Heart left ventricle (tissue), 16 donors: ENCODE measurements at regions of chr12 and their contacts with region 1.

Region 1: DNA sequence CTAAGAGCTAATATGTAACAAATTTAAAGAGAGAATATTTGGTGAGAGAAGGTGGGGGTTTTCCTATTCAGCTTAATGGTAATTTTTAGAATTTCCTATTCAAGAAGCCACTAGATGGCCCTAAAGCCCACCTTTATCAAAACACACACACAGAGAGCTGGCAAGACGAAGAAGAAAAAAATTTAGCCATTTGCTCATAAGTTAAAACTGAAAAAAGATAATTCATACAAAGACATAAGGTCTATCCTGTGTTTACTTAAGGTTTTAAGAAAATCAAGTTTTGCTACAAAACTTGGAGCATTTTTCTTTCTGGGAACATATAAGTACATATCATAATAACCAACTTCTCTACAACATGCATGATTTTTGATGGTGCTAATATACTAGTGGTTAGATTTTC is 46.8 kb upstream of the PCED1B start:
- DNase-seq: no peak
- ATAC-seq: peak in 3 of 4 donors; percentile 45 to 80 (median 77)
- H3K4me3 ChIP-seq: no peak overlapping the region
- H3K27ac ChIP-seq: no peak overlapping the region
- H3K4me1 ChIP-seq: peaks cover 0 to 4% (median 0%) of the 10 kb centered on the region in 12 donors
- H3K27me3 ChIP-seq: no peaks in the 10 kb centered on the region
- CTCF ChIP-seq: peak; percentile 29 to 72 (median 60)
- POLR2A ChIP-seq: no peak

Region 2: GRCh38 chr12:46983393-46984266 is 49.0 kb before region 1 on chr12:
- intact Hi-C with region 1: no loop called
- DNase-seq: no peak
- ATAC-seq: peak in 3 of 4 donors; percentile 68 to 75 (median 70)
- H3K4me3 ChIP-seq: no peak overlapping the region
- H3K27ac ChIP-seq: no peak overlapping the region
- H3K4me1 ChIP-seq: peaks cover 0 to 3% (median 0%) of the 10 kb centered on the region in 12 donors
- H3K27me3 ChIP-seq: no peaks in the 10 kb centered on the region
- CTCF ChIP-seq: peak; percentile 49 to 78 (median 66)
- POLR2A ChIP-seq: no peak

Region 3: GRCh38 chr12:47004634-47005033 is 28.0 kb before region 1 on chr12:
- intact Hi-C with region 1: no loop called
- DNase-seq: no peak
- ATAC-seq: no peak
- H3K4me3 ChIP-seq: no peak overlapping the region
- H3K27ac ChIP-seq: no peak overlapping the region
- H3K4me1 ChIP-seq: no peaks in the 10 kb centered on the region
- H3K27me3 ChIP-seq: peaks cover 0 to 4% (median 0%) of the 10 kb centered on the region in 9 donors
- CTCF ChIP-seq: no peak
- POLR2A ChIP-seq: no peak

Region 4: GRCh38 chr12:47088021-47088944 is 55.6 kb after region 1 on chr12:
- intact Hi-C with region 1: no loop called
- DNase-seq: no peak
- ATAC-seq: no peak
- H3K4me3 ChIP-seq: no peak overlapping the region
- H3K27ac ChIP-seq: peak overlapping the region in 2 of 12 donors; percentile 21 to 95
- H3K4me1 ChIP-seq: peaks cover 0 to 51% (median 14%) of the 10 kb centered on the region in 12 donors
- H3K27me3 ChIP-seq: no peaks in the 10 kb centered on the region
- CTCF ChIP-seq: no peak
- POLR2A ChIP-seq: no peak

Region 5: DNA sequence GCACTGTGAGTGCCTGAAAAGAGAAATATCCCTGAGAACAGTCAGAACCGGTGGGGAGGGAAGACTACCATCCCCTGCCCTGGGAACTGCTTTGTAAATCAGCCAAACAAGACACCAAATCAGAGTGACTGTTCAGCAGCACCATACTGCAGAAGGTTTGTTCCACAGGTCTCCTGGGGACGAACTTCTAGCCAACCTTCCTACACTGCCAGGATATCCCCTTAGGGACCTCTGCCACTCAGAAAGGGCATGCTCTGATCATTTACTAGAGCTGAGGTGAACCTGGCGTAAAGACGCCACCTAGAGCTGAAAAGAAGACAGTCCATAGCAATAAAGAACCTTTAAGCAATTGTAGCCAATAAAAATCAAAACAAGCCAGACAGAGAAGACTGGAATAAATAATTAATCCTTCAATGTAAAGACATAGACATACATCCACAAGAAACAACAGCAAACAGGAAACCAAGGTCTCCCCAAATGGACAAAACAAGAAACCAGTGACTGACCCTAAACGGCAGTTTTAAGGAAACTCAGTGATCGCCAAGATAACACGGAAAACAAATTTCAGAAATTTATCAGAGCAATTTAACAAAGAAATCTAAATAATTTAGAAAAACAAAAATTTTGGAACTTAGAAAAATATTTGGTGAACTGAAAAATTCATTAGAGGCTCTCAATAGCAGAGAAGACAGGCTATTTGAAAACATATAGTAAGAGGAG is 275.2 kb after region 1 on chr12:
- intact Hi-C with region 1: loop called in 9 of 10 experiments (anchors 2 to 5 kb)
- DNase-seq: peak in 1 of 5 donors; percentile 23
- ATAC-seq: peak in 3 of 4 donors; percentile 82 to 86 (median 82)
- H3K4me3 ChIP-seq: peak overlapping the region in 2 of 12 donors; percentile 17 to 35
- H3K27ac ChIP-seq: no peak overlapping the region
- H3K4me1 ChIP-seq: no peaks in the 10 kb centered on the region
- H3K27me3 ChIP-seq: no peaks in the 10 kb centered on the region
- CTCF ChIP-seq: peak; percentile 30 to 58 (median 49)
- POLR2A ChIP-seq: no peak

Region 6: DNA sequence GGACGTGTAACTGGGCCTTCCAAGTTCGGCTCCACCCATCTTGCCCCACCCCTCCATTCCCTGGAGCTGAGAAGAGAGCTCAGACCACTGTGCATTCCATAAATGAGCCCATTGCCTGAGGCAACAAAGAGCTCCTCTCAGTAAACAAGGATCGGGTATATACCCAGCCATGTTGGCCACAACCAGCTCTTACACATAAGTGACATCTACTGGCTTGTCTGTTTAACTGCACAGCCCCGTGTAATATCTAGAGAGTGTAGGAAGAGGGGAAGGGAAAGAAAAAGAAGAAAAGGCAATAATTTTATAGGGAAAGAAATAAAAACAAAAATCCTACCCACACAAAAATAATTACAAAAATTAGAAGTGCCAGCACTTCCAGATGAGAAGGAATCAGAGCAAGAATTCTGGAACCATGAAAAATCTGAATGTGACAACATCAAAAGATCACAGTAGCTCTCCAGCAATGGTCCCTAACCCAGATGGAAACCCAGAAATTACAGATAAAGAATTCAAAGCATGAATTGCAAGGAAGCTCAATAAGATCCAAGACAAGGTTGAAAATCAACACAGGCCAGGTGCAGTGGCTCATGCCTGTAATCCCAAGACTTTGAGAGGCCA is 365.1 kb after region 1 on chr12:
- intact Hi-C with region 1: loop called in 9 of 10 experiments (anchors 2 to 10 kb)
- DNase-seq: no peak
- ATAC-seq: peak in 3 of 4 donors; percentile 61 to 74 (median 67)
- H3K4me3 ChIP-seq: no peak overlapping the region
- H3K27ac ChIP-seq: no peak overlapping the region
- H3K4me1 ChIP-seq: peaks cover 0 to 16% (median 6%) of the 10 kb centered on the region in 12 donors
- H3K27me3 ChIP-seq: no peaks in the 10 kb centered on the region
- CTCF ChIP-seq: peak in 10 of 12 donors; percentile 20 to 52 (median 40)
- POLR2A ChIP-seq: no peak

Region 7: DNA sequence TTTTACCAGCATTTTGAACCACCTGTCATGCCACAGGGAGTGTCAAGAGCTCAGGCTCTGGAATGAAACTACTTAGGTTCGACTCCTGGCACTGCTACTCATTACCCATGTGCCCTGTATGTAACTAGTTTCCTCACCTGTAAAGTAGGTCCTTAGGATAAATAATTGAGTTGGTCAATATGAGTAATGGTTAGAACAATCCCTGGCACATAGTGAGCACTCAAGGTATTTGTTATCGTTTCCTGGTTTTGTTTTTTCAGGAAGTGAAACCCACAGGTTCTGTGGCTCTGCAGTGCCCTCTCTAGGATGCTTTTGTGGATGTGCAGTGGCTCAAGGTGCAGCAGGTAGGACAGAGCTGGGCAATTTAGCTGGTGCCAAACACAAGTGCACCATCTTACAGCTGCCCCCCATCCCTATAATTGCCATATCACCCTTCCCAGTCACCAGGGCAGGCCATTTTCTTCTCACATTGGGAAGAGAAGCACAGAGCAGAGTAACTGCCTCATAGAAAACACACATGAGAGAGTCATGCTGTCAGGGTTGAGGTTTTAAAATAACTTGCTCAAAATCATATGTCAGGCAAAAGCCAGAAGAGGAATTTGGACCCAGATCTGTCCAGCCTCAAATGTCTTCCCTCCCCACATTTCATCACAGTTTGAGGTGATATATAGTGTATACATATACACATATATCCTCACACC is 375.7 kb after region 1 on chr12:
- intact Hi-C with region 1: loop called in 4 of 10 experiments (anchors 5 to 10 kb)
- DNase-seq: no peak
- ATAC-seq: peak in 2 of 4 donors; percentile 51 to 58
- H3K4me3 ChIP-seq: no peak overlapping the region
- H3K27ac ChIP-seq: no peak overlapping the region
- H3K4me1 ChIP-seq: peaks cover 0 to 13% (median 7%) of the 10 kb centered on the region in 12 donors
- H3K27me3 ChIP-seq: no peaks in the 10 kb centered on the region
- CTCF ChIP-seq: peak in 8 of 12 donors; percentile 16 to 40 (median 26)
- POLR2A ChIP-seq: no peak

Region 8: DNA sequence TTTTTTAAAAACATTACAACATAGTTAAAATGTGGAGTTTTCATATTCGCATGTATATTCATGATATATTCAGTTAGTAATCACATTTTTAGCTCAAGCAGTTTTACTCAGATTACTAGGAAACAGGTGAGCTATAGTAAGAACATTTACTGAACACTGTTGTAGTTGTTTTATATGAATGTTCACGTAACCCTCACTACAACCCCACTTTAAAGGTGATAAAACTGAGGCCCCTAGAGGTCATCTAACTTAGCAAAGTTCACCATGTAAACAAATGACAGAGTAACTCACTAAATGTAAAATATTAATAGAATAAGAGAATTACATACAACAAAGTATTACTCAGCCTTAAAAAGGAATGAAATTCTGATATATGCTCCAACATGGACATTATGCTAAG is 647.1 kb after region 1 on chr12:
- intact Hi-C with region 1: loop called in 3 of 10 experiments (anchors 5 to 10 kb)
- DNase-seq: no peak
- ATAC-seq: no peak
- H3K4me3 ChIP-seq: no peak overlapping the region
- H3K27ac ChIP-seq: no peak overlapping the region
- H3K4me1 ChIP-seq: no peaks in the 10 kb centered on the region
- H3K27me3 ChIP-seq: no peaks in the 10 kb centered on the region
- CTCF ChIP-seq: no peak
- POLR2A ChIP-seq: no peak

Region 9: DNA sequence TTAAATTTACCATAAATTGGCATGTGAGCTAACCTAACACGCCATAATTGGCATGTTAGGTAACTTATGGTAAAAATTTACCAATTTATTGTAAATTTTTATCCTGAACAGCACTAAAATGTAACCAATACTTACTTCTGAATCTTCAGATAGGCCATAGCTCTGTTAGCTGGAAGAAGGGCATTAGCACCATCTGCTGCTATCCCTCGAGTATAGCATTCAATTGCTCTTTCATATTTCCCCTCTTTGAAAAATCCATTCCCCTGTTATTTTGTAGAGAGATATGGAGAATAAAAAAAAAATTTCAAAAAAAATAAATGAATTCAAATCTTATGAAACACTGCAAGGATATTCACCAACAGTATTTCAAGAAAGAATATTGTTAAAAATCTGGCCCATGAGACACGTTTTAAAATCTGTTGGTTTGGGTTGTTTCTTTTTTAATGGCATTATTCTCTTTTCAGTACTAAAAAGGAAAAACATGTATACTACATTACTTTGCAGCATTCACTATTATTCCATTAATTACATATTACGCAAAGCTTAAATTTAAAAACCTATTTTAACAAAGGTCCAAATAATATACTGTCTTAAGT is 654.1 kb after region 1 on chr12:
- intact Hi-C with region 1: loop called in 9 of 10 experiments (anchors 2 to 10 kb)
- DNase-seq: no peak
- ATAC-seq: peak in 2 of 4 donors; percentile 50 to 64
- H3K4me3 ChIP-seq: no peak overlapping the region
- H3K27ac ChIP-seq: no peak overlapping the region
- H3K4me1 ChIP-seq: no peaks in the 10 kb centered on the region
- H3K27me3 ChIP-seq: no peaks in the 10 kb centered on the region
- CTCF ChIP-seq: peak; percentile 28 to 73 (median 58)
- POLR2A ChIP-seq: no peak